Activated CD4-positive, alpha-beta memory T cell treated with anti-CD3 and anti-CD28 coated beads for 36 hours (primary cell): ENCODE measurements at regions of chr1 and their contacts with region 1.

Region 1: DNA sequence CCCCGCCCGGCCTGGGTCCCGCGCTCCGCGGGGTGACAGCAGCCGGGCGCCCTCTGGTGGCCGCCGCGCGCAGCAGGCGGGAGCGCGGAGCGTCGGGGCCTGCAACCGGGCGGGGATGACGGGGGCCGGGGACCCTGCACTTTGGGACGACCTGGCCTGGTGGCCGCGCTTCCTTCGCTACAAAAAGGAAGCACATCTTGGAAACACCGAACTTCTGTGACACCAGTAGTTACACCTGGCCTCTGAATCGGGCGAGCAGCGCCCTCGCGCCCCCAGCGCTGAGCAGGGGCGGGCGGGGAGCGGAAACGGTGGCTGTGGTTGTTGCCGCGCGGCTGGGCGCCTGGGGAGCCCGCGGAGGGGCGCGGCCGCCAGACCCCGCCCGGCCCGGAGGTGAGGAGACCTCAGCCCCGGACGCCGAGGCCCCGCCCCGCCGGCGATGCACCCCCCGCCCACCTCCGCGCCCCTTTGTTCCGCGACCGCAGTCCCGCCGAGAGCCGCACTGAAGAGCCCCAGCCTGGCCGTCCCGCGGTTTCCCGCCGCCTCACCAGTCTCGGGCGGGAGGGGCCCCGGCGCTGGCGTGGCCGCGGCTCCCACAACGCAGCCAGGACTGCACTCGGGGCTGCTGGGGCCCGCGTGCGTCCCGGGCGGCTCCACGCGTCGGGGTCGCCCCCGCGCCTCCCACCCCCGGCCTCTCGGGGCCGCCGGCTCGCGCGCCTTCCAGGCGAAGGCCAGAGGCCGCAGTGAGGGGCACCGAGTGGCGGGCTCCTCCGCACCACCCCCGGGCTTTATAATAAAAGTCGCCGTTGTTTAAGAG is 59.3 kb downstream of the H3-3A start:
- DNase-seq: peak; percentile 78
- H3K4me3 Mint-ChIP-seq: peak overlapping the region; percentile 74
- H3K27ac Mint-ChIP-seq: peak overlapping the region; percentile 74
- H3K4me1 Mint-ChIP-seq: peaks cover 26% of the 10 kb centered on the region
- H3K27me3 Mint-ChIP-seq: no peaks in the 10 kb centered on the region

Region 2: GRCh38 chr1:225700164-225700740 is 421.5 kb before region 1 on chr1:
- CTCF ChIA-PET with region 1: no interaction called
- POLR2A ChIA-PET with region 1: no interaction called
- intact Hi-C with region 1: no loop called
- DNase-seq: no peak
- H3K4me3 Mint-ChIP-seq: no peak overlapping the region
- H3K27ac Mint-ChIP-seq: no peak overlapping the region
- H3K4me1 Mint-ChIP-seq: no peaks in the 10 kb centered on the region
- H3K27me3 Mint-ChIP-seq: no peaks in the 10 kb centered on the region

Region 3: DNA sequence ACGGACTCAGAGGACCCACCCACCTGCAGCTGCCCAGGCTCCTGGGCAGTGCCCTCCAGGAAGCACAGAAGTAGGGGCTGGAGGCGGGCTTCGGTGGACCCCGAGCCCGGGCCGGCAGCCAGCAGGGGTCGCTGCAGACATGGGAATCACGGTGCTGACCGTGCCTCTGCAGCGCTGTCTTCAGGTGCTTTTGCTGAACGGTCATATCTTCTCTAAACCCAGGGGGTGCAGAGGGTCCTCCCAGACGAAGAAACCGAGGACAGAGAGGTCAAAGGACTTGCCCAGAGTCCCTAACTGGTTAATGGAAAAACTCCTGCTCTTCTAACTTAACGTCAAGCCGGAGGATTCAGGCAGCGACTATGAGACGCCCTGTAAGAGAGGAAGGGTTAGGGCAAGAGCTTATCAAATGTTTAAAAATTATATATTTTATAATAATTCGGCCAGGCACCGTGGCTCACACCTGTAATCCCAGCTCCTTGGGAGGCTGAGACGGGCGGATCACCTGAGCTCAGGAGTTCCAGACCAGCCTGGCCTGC is 159.3 kb before region 1 on chr1:
- CTCF ChIA-PET with region 1: no interaction called
- POLR2A ChIA-PET with region 1: no interaction called
- intact Hi-C with region 1: loop called (anchors 1 kb)
- DNase-seq: peak; percentile 75
- H3K4me3 Mint-ChIP-seq: no peak overlapping the region
- H3K27ac Mint-ChIP-seq: no peak overlapping the region
- H3K4me1 Mint-ChIP-seq: peaks cover 2% of the 10 kb centered on the region
- H3K27me3 Mint-ChIP-seq: no peaks in the 10 kb centered on the region

Region 4: DNA sequence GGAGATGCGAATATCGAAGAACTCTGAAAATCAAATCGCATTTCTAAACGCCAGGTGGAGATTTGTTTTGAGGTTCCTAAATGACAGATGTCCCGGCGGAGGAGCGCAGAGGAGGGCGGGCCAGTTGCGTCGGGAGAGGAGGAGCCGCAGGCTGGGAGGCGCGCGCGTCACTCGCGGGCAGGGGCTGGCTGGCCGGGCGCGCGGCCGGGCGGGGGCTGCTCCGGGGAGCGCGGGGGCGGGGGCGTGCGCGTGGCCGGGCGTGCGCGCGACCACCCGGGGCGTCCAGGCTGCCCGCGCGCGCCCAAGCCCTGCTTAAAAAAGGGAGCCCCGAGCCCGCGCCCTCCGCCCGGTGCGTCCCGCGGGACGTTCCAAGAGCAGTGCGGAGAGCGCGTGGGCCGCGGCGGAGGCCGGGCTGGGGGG is 12.0 kb before region 1 on chr1:
- CTCF ChIA-PET with region 1: interaction called, 42 read pairs
- POLR2A ChIA-PET with region 1: interaction called, 13 read pairs
- intact Hi-C with region 1: loop called (anchors 1 kb)
- DNase-seq: peak; percentile 89
- H3K4me3 Mint-ChIP-seq: peak overlapping the region; percentile 76
- H3K27ac Mint-ChIP-seq: peak overlapping the region; percentile 79
- H3K4me1 Mint-ChIP-seq: peaks cover 15% of the 10 kb centered on the region
- H3K27me3 Mint-ChIP-seq: no peaks in the 10 kb centered on the region

Region 5: GRCh38 chr1:226162898-226163297 is 41.1 kb after region 1 on chr1:
- CTCF ChIA-PET with region 1: interaction called, 13 read pairs
- POLR2A ChIA-PET with region 1: no interaction called
- intact Hi-C with region 1: no loop called
- DNase-seq: no peak
- H3K4me3 Mint-ChIP-seq: no peak overlapping the region
- H3K27ac Mint-ChIP-seq: no peak overlapping the region
- H3K4me1 Mint-ChIP-seq: peaks cover 7% of the 10 kb centered on the region
- H3K27me3 Mint-ChIP-seq: no peaks in the 10 kb centered on the region

Region 6: GRCh38 chr1:226308723-226309315 is 187.0 kb after region 1 on chr1 and contains the start of gene LIN9:
- CTCF ChIA-PET with region 1: interaction called, 12 read pairs
- POLR2A ChIA-PET with region 1: interaction called, 4 read pairs
- intact Hi-C with region 1: no loop called
- DNase-seq: peak; percentile 95
- H3K4me3 Mint-ChIP-seq: peak within 1 kb of the TSS; percentile 89
- H3K27ac Mint-ChIP-seq: peak within 1 kb of the TSS; percentile 74
- H3K4me1 Mint-ChIP-seq: peaks cover 12% of the 10 kb centered on the region
- H3K27me3 Mint-ChIP-seq: peaks cover 8% of the 10 kb centered on the region
- total RNA-seq, gene LIN9: 9.5 to 9.6 TPM